Naive thymus-derived CD4-positive, alpha-beta T cell (primary cell): ENCODE measurements at regions of chr2 and their contacts with region 1.

Region 1: DNA sequence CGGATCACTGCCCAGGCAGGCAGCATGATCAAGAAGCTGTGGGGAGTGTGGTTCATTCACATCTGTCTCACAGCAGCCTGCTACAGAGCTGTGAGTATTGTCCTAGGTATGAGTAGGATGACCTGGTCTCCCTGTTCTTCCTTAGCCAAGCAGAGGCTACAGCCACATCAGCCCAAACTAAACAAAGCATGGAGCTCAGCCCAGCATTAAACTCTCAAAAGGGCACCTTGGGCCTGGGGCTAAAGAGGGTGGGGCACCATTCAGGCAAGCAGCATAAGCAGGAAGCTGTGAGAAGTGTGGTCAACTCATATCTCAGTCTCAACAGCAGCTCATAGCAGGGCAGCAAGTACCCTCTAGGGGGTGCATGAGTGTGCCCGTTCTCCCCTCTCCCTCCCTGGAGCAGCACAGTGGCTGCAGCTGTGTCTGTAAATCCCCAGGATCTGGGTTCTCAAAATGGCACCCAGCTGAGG is 139.6 kb downstream of the TRABD2A start:
- DNase-seq: peak in 8 of 9 donors; percentile 14 to 43 (median 28)
- ATAC-seq: peak; percentile 94
- H3K4me3 ChIP-seq: no peak overlapping the region
- H3K4me3 Mint-ChIP-seq: peak overlapping the region in 4 of 10 donors; percentile 5 to 30 (median 23)
- H3K27ac ChIP-seq: no peak overlapping the region
- H3K27ac Mint-ChIP-seq: peak overlapping the region in 6 of 9 donors; percentile 7 to 71 (median 38)
- H3K4me1 ChIP-seq: peaks cover 14 to 17% of the 10 kb centered on the region in 2 donors
- H3K4me1 Mint-ChIP-seq: peaks cover 12 to 75% (median 51%) of the 10 kb centered on the region in 7 donors
- H3K27me3 ChIP-seq: no peaks in the 10 kb centered on the region
- H3K27me3 Mint-ChIP-seq: peaks cover 0 to 21% (median 0%) of the 10 kb centered on the region in 5 donors

Region 2: GRCh38 chr2:84338069-84338468 is 403.3 kb before region 1 on chr2:
- CTCF ChIA-PET with region 1: no interaction called
- POLR2A ChIA-PET with region 1: no interaction called
- intact Hi-C with region 1: no loop called
- DNase-seq: no peak
- ATAC-seq: no peak
- H3K4me3 ChIP-seq: no peak overlapping the region
- H3K4me3 Mint-ChIP-seq: no peak overlapping the region
- H3K27ac ChIP-seq: no peak overlapping the region
- H3K27ac Mint-ChIP-seq: no peak overlapping the region
- H3K4me1 ChIP-seq: no peaks in the 10 kb centered on the region
- H3K4me1 Mint-ChIP-seq: no peaks in the 10 kb centered on the region
- H3K27me3 ChIP-seq: no peaks in the 10 kb centered on the region
- H3K27me3 Mint-ChIP-seq: peaks cover 10 to 30% (median 21%) of the 10 kb centered on the region in 5 donors

Region 3: DNA sequence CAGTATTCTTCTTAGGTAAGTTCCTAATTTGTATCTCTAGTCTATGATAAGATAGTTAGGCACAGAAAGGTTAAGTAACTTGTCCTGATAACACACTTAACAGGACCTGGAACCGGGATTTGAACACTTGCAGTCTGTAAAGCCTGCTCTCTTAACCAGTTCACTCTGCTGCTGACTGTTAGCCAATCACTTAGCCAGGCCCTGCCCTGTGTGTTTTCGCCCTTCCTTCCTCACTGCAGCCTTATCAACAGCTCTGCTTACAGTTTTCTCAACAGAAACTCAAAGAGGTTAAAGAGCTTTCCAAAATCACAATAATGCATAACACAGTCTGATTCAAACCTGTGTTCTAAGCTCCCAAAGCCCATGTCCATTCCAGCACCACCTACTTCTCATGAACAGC is 12.1 kb before region 1 on chr2:
- CTCF ChIA-PET with region 1: interaction called, 4 read pairs
- POLR2A ChIA-PET with region 1: interaction called, 10 read pairs
- intact Hi-C with region 1: loop called in 1 of 2 experiments (anchors 2 kb)
- DNase-seq: no peak
- ATAC-seq: no peak
- H3K4me3 ChIP-seq: no peak overlapping the region
- H3K4me3 Mint-ChIP-seq: peak overlapping the region in 4 of 10 donors; percentile 1 to 53 (median 5)
- H3K27ac ChIP-seq: no peak overlapping the region
- H3K27ac Mint-ChIP-seq: peak overlapping the region in 7 of 9 donors; percentile 18 to 85 (median 51)
- H3K4me1 ChIP-seq: peaks cover 0 to 11% of the 10 kb centered on the region in 2 donors
- H3K4me1 Mint-ChIP-seq: peaks cover 3 to 76% (median 61%) of the 10 kb centered on the region in 7 donors
- H3K27me3 ChIP-seq: no peaks in the 10 kb centered on the region
- H3K27me3 Mint-ChIP-seq: no peaks in the 10 kb centered on the region

Region 4: DNA sequence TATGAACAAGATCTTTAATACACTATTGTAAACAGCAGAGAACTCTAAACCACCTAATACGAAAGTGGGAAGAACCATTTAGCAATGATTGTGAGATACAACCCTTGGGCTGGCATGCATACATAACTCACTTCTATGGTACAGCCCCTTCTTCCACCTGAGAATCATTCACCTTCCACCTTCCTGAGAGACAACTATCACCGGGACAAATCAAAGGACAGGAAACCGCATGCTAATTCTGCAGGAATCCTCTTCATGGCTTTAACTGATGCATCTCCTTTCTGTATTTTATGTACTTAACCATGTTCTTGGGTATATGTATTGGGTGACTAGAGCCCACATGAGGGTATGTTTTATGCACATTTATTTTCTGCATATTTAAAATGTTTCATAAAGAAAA is 16.3 kb after region 1 on chr2:
- CTCF ChIA-PET with region 1: interaction called, 3 read pairs
- POLR2A ChIA-PET with region 1: interaction called, 3 read pairs
- intact Hi-C with region 1: loop called in 1 of 2 experiments (anchors 2 kb)
- DNase-seq: no peak
- ATAC-seq: no peak
- H3K4me3 ChIP-seq: no peak overlapping the region
- H3K4me3 Mint-ChIP-seq: peak overlapping the region in 4 of 10 donors; percentile 3 to 53 (median 28)
- H3K27ac ChIP-seq: no peak overlapping the region
- H3K27ac Mint-ChIP-seq: peak overlapping the region in 2 of 9 donors; percentile 5 to 23
- H3K4me1 ChIP-seq: peaks cover 0 to 18% of the 10 kb centered on the region in 2 donors
- H3K4me1 Mint-ChIP-seq: peaks cover 2 to 55% (median 34%) of the 10 kb centered on the region in 7 donors
- H3K27me3 ChIP-seq: no peaks in the 10 kb centered on the region
- H3K27me3 Mint-ChIP-seq: peaks cover 0 to 2% (median 0%) of the 10 kb centered on the region in 5 donors

Region 5: DNA sequence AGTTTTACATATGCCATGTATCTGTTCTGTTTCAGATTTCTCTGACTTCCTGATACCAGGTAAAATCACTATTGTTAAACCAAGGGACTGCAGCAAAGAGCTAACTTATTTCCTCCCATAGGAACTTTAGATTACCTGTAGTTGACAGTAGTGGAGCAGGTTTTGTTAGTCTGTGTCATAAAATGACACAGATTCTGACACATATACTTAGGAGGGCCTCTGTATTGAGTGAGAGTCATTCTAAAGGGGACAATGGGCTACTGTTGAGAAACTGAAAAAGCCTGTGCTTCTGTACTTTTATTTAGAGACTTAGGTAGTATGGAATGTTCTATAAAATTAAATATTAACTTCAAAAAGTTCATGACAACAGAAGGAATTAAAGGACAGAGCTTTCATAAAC is 277.8 kb after region 1 on chr2:
- CTCF ChIA-PET with region 1: no interaction called
- POLR2A ChIA-PET with region 1: no interaction called
- intact Hi-C with region 1: no loop called
- DNase-seq: no peak
- ATAC-seq: no peak
- H3K4me3 ChIP-seq: no peak overlapping the region
- H3K4me3 Mint-ChIP-seq: no peak overlapping the region
- H3K27ac ChIP-seq: no peak overlapping the region
- H3K27ac Mint-ChIP-seq: peak overlapping the region in 6 of 9 donors; percentile 5 to 57 (median 34)
- H3K4me1 ChIP-seq: peaks cover 2 to 6% of the 10 kb centered on the region in 2 donors
- H3K4me1 Mint-ChIP-seq: peaks cover 30 to 70% (median 57%) of the 10 kb centered on the region in 7 donors
- H3K27me3 ChIP-seq: no peaks in the 10 kb centered on the region
- H3K27me3 Mint-ChIP-seq: no peaks in the 10 kb centered on the region